Pancreas (tissue), 10 donors: ENCODE measurements at regions of chr1 and their contacts with region 1.

Region 1: GRCh38 chr1:153946622-153947241 is at the start of gene DENND4B:
- DNase-seq: peak; percentile 78 to 93 (median 85)
- ATAC-seq: peak; percentile 90 to 93 (median 91)
- H3K4me3 ChIP-seq: peak within 1 kb of the TSS; percentile 85 to 97 (median 94)
- H3K27ac ChIP-seq: peak within 1 kb of the TSS; percentile 76 to 93 (median 89)
- H3K4me1 ChIP-seq: no peaks in the 10 kb centered on the region
- H3K27me3 ChIP-seq: no peaks in the 10 kb centered on the region
- CTCF ChIP-seq: peak; percentile 89 to 96 (median 96)
- total RNA-seq, gene DENND4B: 17.8 to 41.7 (median 20.4) TPM

Region 2: DNA sequence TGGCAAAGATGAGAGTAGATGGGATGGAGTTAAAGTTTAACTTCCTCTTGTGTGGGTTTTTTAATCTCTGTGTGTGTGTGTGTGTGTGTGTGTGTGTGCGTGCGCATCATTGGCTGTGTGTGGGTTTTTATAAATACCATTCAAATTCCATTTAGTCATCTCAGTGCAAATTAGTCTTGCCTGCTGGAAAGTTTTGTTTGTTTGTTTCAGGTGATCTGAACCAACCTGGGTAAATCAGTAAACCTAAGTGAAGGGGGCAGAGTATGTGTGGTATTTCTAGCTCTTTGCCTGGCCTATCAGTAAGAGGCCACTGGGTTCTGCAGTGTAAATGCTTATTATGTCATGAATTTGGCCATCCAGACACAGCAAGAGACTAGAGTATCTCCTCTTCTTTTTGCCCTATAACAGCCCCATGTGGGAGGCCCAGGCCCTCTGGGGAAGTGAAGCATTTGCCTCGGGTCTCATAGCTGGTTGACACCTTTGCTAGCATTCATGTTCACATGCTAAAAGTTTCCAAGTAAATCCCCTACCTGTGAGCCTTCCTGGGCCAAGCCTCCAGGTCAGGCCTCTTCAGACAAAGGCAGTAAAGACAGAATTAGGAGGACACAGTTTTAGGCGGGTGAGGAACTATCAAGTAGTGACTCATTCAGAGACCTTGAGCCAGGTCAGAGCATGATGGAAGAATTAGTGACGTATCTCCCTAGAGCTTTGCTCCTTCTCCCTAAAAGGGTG is 204.2 kb before region 1 on chr1:
- intact Hi-C with region 1: no loop called
- DNase-seq: peak in 4 of 6 donors; percentile 38 to 60 (median 54)
- ATAC-seq: peak; percentile 81 to 93 (median 86)
- H3K4me3 ChIP-seq: no peak overlapping the region
- H3K27ac ChIP-seq: peak overlapping the region; percentile 49 to 83 (median 70)
- H3K4me1 ChIP-seq: peaks cover 0 to 15% (median 11%) of the 10 kb centered on the region in 3 donors
- H3K27me3 ChIP-seq: no peaks in the 10 kb centered on the region
- CTCF ChIP-seq: no peak

Region 3: GRCh38 chr1:153796791-153797659 is 149.7 kb before region 1 on chr1:
- intact Hi-C with region 1: loop called in 1 of 3 experiments (anchors 10 kb)
- DNase-seq: peak; percentile 72 to 87 (median 82)
- ATAC-seq: peak; percentile 81 to 94 (median 84)
- H3K4me3 ChIP-seq: no peak overlapping the region
- H3K27ac ChIP-seq: no peak overlapping the region
- H3K4me1 ChIP-seq: no peaks in the 10 kb centered on the region
- H3K27me3 ChIP-seq: no peaks in the 10 kb centered on the region
- CTCF ChIP-seq: peak; percentile 92 to 94 (median 94)

Region 4: GRCh38 chr1:153827168-153827964 is 119.4 kb before region 1 on chr1:
- intact Hi-C with region 1: loop called in 1 of 3 experiments (anchors 10 kb)
- DNase-seq: no peak
- ATAC-seq: no peak
- H3K4me3 ChIP-seq: no peak overlapping the region
- H3K27ac ChIP-seq: no peak overlapping the region
- H3K4me1 ChIP-seq: no peaks in the 10 kb centered on the region
- H3K27me3 ChIP-seq: no peaks in the 10 kb centered on the region
- CTCF ChIP-seq: no peak